Activated T-helper 2 cell treated with anti-CD3 and anti-CD28 coated beads, Interferon-gamma antibody, Interleukin-2, Interleukin-4, amounts not matched to agents 10 μg/mL and 5 μg/mL and 100 μg/mL, durations not matched to agents 14 hours and 24 hours and 36 hours (primary cell): ENCODE measurements at regions of chr1 and their contacts with region 1.

Region 1: DNA sequence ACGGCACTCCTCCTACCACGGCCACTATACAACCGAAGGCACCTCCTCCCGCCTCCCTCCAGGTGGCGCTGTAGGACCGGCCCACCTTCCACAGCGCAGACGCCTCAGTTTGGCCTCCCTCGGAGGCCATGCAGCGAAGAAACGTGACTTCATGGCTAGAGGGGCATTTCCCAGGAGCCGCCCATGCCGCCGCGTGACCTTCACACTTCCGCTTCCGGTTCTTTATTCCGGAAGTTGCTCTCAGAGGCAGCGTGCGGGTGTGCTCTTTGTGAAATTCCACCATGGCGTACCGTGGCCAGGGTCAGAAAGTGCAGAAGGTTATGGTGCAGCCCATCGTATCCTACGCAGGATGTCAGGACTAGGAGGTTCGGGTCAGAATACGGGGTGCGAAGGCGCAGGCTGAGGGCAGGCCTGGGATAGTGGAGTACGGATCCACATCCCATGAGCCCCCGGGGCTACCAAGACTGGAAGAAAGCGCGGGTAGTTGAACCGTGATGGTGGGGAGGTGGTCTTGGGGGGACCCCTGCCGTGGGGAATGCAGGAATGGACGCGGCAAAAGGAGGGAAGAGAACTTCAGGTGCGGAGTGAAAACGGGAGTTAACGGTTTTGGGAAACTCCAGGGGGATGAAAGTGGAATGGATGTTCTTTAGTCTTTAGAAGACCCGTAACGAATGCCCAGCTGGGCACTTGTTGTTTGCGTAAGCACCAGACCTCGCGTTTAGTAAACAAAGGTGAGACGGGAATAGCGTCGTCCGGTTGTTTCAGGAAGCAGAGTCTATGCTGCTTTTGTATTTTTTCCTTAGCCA is at the start of gene SNRPE:
- DNase-seq: peak; percentile 96
- H3K4me3 Mint-ChIP-seq: peak within 1 kb of the TSS; percentile 100
- H3K27ac Mint-ChIP-seq: peak within 1 kb of the TSS; percentile 97
- H3K4me1 Mint-ChIP-seq: peaks cover 15% of the 10 kb centered on the region
- H3K27me3 Mint-ChIP-seq: no peaks in the 10 kb centered on the region
- total RNA-seq, gene SNRPE: 240 and 255 TPM in 2 replicates

Region 2: DNA sequence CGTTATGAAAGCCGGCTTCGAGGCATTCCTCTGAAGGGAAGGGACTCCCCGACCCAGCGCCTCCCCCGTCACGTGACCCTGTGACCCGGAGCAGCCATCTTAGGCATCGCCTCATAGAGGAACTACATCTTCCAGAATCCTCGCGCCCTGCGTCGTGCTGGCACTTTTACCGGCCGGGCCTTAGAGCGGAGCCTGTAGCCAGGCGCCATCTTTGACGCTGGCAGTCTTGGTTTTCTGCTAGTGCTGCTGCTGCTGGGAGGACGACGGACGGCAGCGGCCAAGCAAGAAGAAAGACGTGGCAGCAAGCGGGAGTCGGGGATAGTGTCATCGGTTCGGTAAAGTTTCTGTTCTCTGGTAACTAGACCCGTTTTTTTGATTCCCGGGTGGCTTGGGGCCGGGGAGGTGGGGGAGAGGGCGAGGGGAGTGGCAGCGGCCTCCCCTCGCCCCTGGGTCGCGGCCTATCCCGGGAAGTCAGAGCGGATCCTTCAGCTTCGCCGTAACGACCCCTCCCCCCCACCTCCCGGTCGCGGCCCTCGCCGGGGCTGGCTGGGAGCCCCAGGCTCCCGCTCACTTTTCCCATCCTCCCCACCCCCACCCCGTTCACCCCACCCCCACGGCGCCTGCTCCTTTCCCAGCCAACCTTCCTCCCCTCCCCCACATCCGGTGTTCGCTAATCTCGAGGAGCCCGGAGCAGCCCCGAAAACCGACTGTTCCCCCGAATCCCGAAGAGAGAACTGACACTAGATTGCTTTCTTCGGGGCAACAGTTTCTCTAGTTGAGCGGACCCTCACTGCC is 65.9 kb before region 1 on chr1 and contains the starts of genes ZBED6 and ZC3H11A:
- intact Hi-C with region 1: loop called (anchors 1 kb)
- DNase-seq: peak; percentile 98
- H3K4me3 Mint-ChIP-seq: peak within 1 kb of the TSS; percentile 99
- H3K27ac Mint-ChIP-seq: peak within 1 kb of the TSS; percentile 99
- H3K4me1 Mint-ChIP-seq: peaks cover 42% of the 10 kb centered on the region
- H3K27me3 Mint-ChIP-seq: no peaks in the 10 kb centered on the region
- total RNA-seq, gene ZBED6: 21.9 and 22.2 TPM in 2 replicates
- total RNA-seq, gene ZC3H11A: 82.8 and 86.6 TPM in 2 replicates

Region 3: DNA sequence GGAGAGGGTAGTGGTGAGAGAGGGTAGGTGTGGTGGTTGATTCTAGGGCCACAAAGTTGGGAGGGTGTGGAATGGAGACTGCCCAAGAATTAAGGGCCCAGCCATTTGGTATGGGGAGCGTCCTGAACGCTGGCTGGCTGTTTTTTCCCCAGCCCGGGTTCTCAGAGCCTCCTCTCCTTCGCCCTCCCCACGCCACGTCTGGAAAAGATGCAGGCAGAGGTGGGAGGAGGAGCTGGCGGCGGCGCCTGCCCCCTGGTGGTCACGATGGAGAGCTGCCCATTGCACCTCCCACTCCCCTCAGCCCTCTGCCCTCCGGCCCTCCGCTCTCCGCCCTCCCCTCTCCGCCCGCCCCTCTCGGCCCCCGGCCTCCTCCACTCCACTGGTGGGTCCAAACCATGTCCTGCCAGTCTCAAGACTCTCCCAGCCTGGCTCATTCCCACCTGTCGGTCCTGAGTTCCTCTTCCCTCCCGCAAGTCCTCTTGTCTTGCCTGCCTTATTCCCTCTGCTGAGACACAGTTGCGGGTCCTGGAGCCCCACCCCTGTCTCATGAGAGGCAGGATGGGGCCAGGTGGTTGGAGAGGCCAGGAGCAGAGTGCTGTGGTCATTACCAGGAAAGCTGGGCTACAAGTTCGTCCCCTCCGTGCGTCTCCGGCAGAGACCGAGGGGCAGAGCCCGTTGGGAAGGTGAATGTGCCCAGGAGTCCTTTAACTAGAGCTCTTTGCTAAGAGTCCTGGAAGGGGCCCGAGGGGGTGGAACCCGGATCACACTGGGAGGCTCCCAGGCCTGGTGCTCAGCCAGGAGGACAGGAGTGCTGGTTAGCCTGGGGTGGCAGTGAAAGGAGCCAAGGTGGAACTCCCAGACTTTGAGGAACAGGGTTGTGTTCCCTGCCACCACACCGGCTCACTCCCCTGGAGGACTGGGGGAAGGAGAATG is 267.6 kb after region 1 on chr1:
- intact Hi-C with region 1: loop called (anchors 1 kb)
- DNase-seq: peak; percentile 53
- H3K4me3 Mint-ChIP-seq: no peak overlapping the region
- H3K27ac Mint-ChIP-seq: no peak overlapping the region
- H3K4me1 Mint-ChIP-seq: peaks cover 9% of the 10 kb centered on the region
- H3K27me3 Mint-ChIP-seq: no peaks in the 10 kb centered on the region

Region 4: DNA sequence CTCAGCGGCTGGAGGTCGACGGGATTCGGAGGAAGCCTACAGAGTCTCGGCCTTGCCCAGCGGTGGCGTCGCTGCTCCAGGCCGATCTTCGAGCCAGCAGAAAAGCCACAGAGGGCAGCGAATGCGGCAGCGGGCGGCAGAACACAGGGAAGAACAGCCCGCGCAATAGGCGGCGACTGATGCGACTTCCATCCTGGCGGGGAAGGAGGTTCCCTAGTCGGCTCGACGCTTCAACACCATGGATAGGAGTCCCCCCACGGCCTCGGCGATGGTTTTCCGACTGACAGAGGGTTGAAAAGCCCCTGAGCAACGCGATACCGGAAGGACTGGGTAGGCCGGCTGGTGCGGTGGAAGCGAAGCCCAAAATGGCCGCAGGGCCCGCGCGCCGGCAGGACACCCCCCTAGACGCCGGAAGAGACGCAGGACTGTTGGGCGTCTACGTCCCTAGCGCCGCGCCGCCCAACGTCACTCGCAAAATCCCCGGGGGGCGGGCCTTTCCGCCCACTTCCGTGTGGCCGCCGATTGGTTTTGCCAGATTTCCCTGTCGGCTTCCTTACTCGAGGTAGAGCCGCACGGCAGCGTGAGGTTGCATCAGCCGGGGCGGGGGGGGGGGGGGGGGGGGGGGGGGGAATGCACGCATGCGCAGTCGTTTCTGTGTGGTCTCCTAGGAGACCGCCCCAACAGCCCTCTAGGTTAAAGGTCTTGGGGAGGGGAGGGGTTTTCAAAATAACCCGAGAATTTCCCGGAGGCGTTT is 550.0 kb after region 1 on chr1 and contains the start of gene PPP1R15B:
- intact Hi-C with region 1: loop called (anchors 2 kb)
- DNase-seq: peak; percentile 98
- H3K4me3 Mint-ChIP-seq: peak within 1 kb of the TSS; percentile 98
- H3K27ac Mint-ChIP-seq: peak within 1 kb of the TSS; percentile 98
- H3K4me1 Mint-ChIP-seq: peaks cover 14% of the 10 kb centered on the region
- H3K27me3 Mint-ChIP-seq: no peaks in the 10 kb centered on the region
- total RNA-seq, gene PPP1R15B: 63.4 and 64.3 TPM in 2 replicates